Activated CD4-positive, alpha-beta T cell treated with anti-CD3 and anti-CD28 coated beads for 36 hours (primary cell): ENCODE measurements at regions of chr19 and their contacts with region 1.

Region 1: DNA sequence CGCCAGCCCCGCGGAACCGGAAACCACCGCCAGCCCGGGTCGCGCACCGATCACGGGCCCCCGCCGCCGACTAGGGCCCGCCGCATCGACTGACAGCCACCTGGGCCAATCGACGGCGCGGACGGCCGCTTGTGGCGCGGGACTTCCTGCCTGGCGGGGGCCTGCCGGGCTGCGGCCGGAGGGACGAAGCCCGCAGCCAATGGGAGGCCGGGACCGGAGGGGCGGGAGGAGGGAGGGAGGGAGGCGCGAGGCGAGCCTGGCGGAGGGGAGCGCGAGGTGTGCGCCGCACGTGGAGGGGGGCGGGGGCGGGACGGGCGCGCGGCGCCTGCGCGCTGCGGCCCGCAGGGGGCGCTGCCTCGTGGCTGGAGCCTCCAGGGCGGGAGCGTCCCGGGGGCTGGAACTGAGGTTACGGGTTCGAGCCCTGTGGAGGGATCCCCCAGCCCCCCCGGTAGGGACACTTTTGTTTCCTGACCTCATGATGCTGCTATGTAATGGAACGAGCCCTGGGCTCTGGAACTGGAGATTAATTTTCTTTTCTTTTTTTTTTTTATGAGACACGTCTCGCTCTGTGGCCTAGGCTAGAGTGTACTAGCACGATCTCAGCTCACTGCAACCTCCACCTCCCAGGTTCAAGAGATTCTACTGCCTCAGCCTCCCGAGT is at the start of gene MLLT1:
- DNase-seq: peak; percentile 98
- ATAC-seq: peak; percentile 98
- H3K4me3 Mint-ChIP-seq: peak within 1 kb of the TSS; percentile 98
- H3K27ac Mint-ChIP-seq: peak within 1 kb of the TSS; percentile 93
- H3K4me1 Mint-ChIP-seq: peaks cover 38% of the 10 kb centered on the region
- H3K27me3 Mint-ChIP-seq: peaks cover 2% of the 10 kb centered on the region
- total RNA-seq, gene MLLT1: 45.0 to 46.6 TPM

Region 2: DNA sequence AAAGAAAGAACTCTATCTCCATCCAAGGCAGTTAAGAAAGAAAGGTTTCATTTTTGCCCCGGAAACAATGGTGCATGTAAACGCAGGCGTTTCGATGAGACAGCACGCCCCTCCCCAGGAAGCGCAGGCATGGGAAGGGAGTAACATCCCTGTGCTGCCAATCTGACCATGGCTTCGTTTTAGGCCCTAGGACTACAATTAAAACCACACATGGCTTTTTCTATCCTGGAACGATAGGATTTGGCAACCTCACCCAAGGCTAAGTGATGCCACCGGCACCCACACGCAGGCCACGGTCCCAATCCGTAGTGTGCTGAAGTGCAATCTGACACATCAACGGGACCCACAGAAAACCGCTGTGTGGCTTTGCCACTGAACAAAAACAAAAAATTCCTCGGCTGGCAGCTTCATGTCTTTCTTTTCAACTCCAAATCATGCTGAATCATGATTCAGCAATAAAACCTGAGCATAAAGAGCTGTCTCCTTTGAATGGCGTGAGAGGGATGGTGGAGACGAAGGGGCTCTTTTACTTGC is 326.3 kb before region 1 on chr19:
- CTCF ChIA-PET with region 1: no interaction called
- POLR2A ChIA-PET with region 1: no interaction called
- intact Hi-C with region 1: no loop called
- DNase-seq: peak; percentile 72
- ATAC-seq: peak; percentile 35
- H3K4me3 Mint-ChIP-seq: peak overlapping the region; percentile 53
- H3K27ac Mint-ChIP-seq: peak overlapping the region; percentile 98
- H3K4me1 Mint-ChIP-seq: peaks cover 93% of the 10 kb centered on the region
- H3K27me3 Mint-ChIP-seq: no peaks in the 10 kb centered on the region

Region 3: DNA sequence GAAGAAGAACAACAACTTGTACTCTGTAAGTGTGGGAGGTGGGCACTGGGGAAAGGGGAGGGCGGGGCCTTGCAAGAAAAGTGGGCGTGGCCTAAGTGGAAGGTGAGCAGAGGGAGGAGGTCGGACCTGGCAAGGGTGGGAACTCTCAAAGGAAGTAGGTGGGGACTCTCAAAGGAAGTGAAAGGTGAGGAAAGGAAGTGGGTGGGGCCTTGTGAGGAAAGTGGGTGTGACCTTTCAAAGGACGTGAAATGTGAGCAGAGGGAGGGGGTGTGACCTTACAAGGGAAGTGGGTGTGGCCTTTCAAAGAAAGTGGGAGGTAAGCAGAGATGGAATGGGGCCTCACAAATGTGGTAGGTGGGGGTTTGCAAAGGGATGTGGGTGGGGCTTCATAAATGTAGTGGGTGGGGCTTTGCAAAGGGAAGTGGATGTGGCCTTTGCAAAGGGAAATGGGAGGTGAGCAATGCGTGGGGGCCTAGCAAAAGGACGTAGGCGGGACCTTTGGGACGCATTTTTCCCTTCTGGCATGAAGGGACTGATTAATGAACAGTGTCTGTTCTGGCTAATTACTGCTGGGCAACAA is 118.7 kb before region 1 on chr19:
- CTCF ChIA-PET with region 1: no interaction called
- POLR2A ChIA-PET with region 1: no interaction called
- intact Hi-C with region 1: loop called in 1 of 2 experiments (anchors 1 kb)
- DNase-seq: peak; percentile 71
- ATAC-seq: peak; percentile 85
- H3K4me3 Mint-ChIP-seq: no peak overlapping the region
- H3K27ac Mint-ChIP-seq: no peak overlapping the region
- H3K4me1 Mint-ChIP-seq: peaks cover 7% of the 10 kb centered on the region
- H3K27me3 Mint-ChIP-seq: no peaks in the 10 kb centered on the region

Region 4: GRCh38 chr19:6362027-6362350 is 81.9 kb after region 1 on chr19:
- CTCF ChIA-PET with region 1: interaction called, 4 read pairs
- POLR2A ChIA-PET with region 1: no interaction called
- intact Hi-C with region 1: loop called in 1 of 2 experiments (anchors 1 kb)
- DNase-seq: no peak
- ATAC-seq: peak; percentile 1
- H3K4me3 Mint-ChIP-seq: peak overlapping the region; percentile 85
- H3K27ac Mint-ChIP-seq: peak overlapping the region; percentile 91
- H3K4me1 Mint-ChIP-seq: peaks cover 16% of the 10 kb centered on the region
- H3K27me3 Mint-ChIP-seq: no peaks in the 10 kb centered on the region